HEK293 (cell line): ENCODE measurements at regions of chr18 and their contacts with region 1.

Region 1: DNA sequence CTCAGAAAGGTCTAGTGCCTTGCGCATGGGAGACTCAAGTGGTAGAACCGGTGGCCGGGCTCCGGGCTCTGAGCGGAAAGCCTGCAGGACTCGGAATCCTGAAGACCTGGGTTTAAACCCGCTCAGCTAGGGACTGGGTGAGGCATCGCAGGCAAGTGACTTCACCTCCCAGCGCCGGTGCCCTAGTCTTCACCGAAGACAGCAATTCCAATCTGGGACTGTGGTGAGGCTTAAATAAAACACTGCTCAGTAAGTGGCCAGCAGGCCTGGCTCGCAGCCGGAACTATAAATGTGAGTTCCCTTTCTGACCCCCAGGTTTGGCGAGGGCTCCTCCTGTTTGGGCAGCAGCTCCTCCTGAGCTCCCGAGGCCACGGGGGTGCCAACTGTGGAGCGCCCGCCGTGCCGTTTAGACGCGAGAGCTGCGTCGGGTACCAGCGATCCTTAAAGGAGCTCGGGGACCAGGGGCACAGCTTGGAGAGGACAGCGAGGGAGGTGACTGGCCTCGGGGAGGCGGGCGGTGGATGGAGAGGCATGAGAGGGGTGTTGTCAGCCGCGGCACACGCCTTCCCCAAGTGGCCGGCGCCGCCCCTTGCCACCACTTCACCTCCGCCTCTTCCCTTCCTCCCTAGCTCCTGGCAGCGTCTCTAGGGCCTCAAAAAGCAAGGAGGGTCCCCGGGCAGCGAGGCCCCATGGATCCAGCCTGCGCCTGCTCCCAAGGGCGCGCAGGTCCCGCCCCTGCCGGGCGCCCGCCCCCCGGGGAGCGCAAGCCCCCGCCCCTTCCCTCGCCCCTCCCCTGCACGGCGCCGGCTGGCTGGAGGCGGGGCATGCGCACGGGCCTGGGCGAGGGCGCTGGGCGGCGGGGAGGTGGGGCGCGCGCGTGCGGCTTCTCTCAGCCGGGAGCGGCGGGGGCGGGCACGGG is 736 bp upstream of the MTCL1 start:
- H3K4me3 ChIP-seq: peak overlapping the region; percentile 43
- H3K27ac ChIP-seq: peak overlapping the region; percentile 57; the same call in 1 of the 2 replicates
- H3K4me1 ChIP-seq: peaks cover 6% of the 10 kb centered on the region
- CTCF ChIP-seq: peak; percentile 53; the same call in 1 of the 2 replicates

Region 2: DNA sequence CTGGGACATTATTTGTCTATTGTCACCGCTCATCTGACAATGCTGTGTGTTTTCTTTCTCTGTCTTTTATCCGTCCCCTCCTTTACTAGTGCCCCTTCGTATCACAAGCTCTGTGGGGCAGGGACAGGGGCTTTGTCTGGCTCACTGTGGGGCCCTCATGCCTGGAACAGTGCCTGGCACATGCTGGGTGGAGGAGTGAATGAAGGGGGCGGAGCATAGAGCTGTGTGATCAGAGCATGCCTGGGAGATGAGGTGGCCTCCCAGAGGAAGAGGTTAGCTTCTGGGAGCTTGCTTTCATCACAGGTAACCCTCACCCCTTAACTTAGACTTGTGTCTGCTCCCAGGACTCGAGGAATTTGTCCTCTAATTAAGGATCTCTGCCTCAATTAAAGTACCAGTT is 17.1 kb after region 1 on chr18:
- CTCF ChIA-PET with region 1: interaction called, 17 read pairs
- POLR2A ChIA-PET with region 1: interaction called, 3 read pairs
- H3K4me3 ChIP-seq: no peak overlapping the region
- H3K27ac ChIP-seq: no peak overlapping the region
- H3K4me1 ChIP-seq: peaks cover 28% of the 10 kb centered on the region
- CTCF ChIP-seq: no peak